CD8-positive, alpha-beta T cell (primary cell): ENCODE measurements at regions of chr19 and their contacts with region 1.

Region 1: GRCh38 chr19:21568816-21569493 is 63.6 kb downstream of the ZNF429 start:
- DNase-seq: peak; percentile 49 to 97 (median 84)
- ATAC-seq: peak; percentile 98
- H3K4me3 ChIP-seq: peak overlapping the region; percentile 57 to 83
- H3K4me3 Mint-ChIP-seq: peak overlapping the region; percentile 97
- H3K27ac ChIP-seq: peak overlapping the region; percentile 72 to 84
- H3K27ac Mint-ChIP-seq: peak overlapping the region; percentile 99
- H3K4me1 ChIP-seq: peaks cover 4% of the 10 kb centered on the region
- H3K4me1 Mint-ChIP-seq: peaks cover 29% of the 10 kb centered on the region
- H3K27me3 ChIP-seq: no peaks in the 10 kb centered on the region
- H3K27me3 Mint-ChIP-seq: no peaks in the 10 kb centered on the region
- CTCF ChIP-seq: no peak

Region 2: DNA sequence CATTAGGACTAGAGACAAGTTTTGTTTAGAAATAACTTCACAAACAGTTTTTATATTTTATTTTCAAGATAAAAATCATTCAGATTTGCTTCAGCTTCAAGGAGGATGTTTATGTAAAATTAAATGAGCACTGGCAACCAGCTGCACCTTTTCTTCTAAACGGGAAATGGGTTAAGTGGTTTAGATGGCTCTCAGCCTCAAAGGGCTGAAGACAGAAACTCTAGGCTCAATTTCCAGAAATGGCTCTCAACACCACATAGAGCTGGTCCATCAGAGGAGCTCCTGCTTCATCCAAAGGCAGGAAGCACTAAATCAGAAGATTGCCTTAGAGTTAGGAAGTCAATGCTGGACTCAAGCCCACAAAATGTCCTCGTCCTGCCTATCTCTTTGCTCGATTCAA is 11.1 kb after region 1 on chr19:
- CTCF ChIA-PET with region 1: interaction called, 8 read pairs
- POLR2A ChIA-PET with region 1: interaction called, 30 read pairs
- intact Hi-C with region 1: no loop called
- DNase-seq: peak in 1 of 9 experiments; percentile 47
- ATAC-seq: peak; percentile 38
- H3K4me3 ChIP-seq: peak overlapping the region in 1 of 2 experiments; percentile 22
- H3K4me3 Mint-ChIP-seq: peak overlapping the region; percentile 24
- H3K27ac ChIP-seq: peak overlapping the region; percentile 0 to 59
- H3K27ac Mint-ChIP-seq: peak overlapping the region; percentile 80
- H3K4me1 ChIP-seq: peaks cover 36% of the 10 kb centered on the region
- H3K4me1 Mint-ChIP-seq: peaks cover 59% of the 10 kb centered on the region
- H3K27me3 ChIP-seq: no peaks in the 10 kb centered on the region
- H3K27me3 Mint-ChIP-seq: no peaks in the 10 kb centered on the region
- CTCF ChIP-seq: no peak

Region 3: DNA sequence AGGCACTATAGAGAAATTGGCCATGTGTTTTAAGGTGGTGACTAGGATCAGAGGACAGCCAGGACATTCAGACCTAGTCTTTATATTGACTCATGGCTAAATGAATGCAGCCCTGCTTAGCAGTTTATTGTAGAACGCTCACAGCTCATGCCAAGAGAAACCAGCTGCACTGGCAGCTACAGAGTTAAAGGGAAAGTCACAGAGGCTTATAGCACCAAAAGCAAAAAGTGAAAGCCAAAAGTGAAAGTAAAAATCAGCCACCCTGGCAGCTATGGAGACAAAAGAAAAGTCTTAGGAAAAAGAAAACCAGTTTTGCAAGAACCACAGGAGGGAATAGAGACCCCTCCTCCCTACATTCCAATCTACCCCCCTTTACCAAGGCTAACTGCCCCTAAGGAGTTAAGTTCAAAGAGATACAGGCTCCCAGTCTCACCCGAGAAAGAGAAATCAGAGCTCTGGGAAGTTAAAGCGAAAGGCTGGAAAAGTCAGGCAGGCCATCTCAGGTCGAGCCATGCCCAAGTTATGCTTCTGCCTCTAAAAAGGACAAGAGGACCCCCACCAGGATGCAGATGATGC is 35.5 kb after region 1 on chr19:
- CTCF ChIA-PET with region 1: no interaction called
- POLR2A ChIA-PET with region 1: interaction called, 11 read pairs
- intact Hi-C with region 1: loop called in 1 of 2 experiments (anchors 2 kb)
- DNase-seq: peak in 1 of 9 experiments; percentile 65
- ATAC-seq: peak; percentile 85
- H3K4me3 ChIP-seq: peak overlapping the region; percentile 53 to 61
- H3K4me3 Mint-ChIP-seq: peak overlapping the region; percentile 95
- H3K27ac ChIP-seq: peak overlapping the region; percentile 58 to 64
- H3K27ac Mint-ChIP-seq: peak overlapping the region; percentile 96
- H3K4me1 ChIP-seq: peaks cover 12% of the 10 kb centered on the region
- H3K4me1 Mint-ChIP-seq: peaks cover 30% of the 10 kb centered on the region
- H3K27me3 ChIP-seq: no peaks in the 10 kb centered on the region
- H3K27me3 Mint-ChIP-seq: no peaks in the 10 kb centered on the region
- CTCF ChIP-seq: no peak